Dorsolateral prefrontal cortex (tissue), 120 donors: ENCODE measurements at regions of chr11 and their contacts with region 1.

Region 1: DNA sequence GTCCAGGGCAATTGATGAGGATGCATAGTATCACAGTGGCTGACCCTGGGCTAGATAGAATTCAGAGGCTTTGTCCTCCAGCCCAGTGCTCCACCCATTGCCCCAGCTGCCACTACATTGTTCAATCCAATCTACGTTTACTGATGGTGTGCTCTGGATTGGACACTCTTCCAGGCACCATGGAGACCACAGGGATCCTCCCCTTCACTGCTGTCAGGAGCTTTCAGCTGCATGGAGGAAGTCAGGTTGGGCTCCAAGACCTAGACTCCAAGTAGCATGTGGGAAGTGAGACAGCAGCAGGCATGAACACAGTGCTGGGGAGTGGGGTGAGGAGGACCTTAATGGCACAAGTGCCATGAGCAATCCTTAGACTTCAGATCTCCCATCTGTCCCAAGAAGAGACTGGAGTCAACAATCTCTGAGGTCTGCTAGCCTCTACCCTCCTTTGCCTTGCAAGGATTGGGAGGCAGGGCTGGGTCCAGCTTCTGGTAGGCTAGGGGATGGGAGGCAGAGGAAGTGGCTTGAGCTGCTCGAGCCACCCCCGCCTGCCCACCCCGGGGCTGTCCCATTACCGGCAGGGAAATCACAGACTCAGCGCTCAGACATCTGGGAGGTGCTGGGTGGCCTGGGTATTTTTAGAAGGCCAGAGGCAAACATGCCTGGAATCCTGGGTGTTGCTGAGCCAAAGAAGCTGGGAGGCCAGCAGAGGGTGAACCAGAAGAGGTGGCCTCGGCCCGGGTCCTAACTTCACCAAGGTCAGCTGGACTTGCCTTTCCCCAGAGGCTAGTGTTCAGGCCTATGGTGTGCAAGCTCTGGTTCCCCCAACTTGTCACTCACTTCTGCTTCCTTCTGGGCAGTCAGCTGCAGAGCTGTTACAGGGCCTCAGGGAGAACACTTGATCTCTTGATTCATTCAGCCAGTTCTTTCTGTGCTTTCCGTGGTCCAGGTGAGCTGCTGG is 15.2 kb upstream of the FCHSD2 start:
- DNase-seq: no peak
- H3K4me3 ChIP-seq: no peak overlapping the region
- H3K27ac ChIP-seq: peak overlapping the region in 22 of 59 donors; percentile 1 to 72 (median 44)
- H3K27me3 ChIP-seq: peaks cover 0 to 4% (median 0%) of the 10 kb centered on the region in 45 donors
- CTCF ChIP-seq: no peak

Region 2: GRCh38 chr11:72736452-72737069 is 420.8 kb before region 1 on chr11:
- intact Hi-C with region 1: loop called in 1 of 2 experiments (anchors 10 kb)
- DNase-seq: no peak
- H3K4me3 ChIP-seq: no peak overlapping the region
- H3K27ac ChIP-seq: peak overlapping the region in 28 of 59 donors; percentile 2 to 75 (median 34)
- H3K27me3 ChIP-seq: no peaks in the 10 kb centered on the region
- CTCF ChIP-seq: no peak

Region 3: DNA sequence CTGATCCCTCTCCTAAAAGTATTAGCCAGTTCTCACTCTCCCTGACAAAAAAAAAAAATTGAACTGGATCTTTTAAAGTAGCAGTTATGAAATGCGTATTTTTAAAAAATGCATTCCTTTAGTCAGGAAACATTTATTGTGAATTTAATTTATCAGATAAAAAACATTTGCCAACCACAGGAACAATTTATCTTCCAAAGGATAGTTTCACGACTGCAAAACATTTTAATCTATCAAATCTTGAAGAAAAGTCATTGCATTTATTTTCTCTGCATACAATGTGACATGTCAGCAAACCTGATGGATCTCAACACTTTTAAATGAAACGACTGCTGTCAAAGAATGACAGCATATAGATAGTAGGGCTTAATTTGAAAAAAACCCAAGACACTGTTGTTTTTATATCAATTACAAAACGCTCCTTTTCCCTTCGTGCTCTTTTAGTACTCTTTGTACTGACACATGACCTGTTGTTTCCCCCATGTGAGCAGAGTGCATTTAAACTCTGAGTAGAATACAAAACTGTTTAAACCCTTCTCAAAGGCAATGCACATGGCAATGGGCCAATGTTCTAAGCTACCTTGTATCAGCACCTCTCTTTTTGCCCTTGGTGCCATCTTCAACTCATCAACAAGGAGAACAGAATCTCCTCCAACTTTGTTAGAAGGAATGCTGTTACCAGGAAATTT is 236.2 kb before region 1 on chr11:
- intact Hi-C with region 1: no loop called
- DNase-seq: peak in 1 of 10 donors; percentile 6
- H3K4me3 ChIP-seq: peak overlapping the region in 2 of 59 donors; percentile 1 to 22
- H3K27ac ChIP-seq: peak overlapping the region in 39 of 59 donors; percentile 8 to 77 (median 40)
- H3K27me3 ChIP-seq: no peaks in the 10 kb centered on the region
- CTCF ChIP-seq: no peak

Region 4: GRCh38 chr11:73227588-73228211 is 70.4 kb after region 1 on chr11:
- intact Hi-C with region 1: no loop called
- DNase-seq: peak in 6 of 10 donors; percentile 2 to 32 (median 20)
- H3K4me3 ChIP-seq: no peak overlapping the region
- H3K27ac ChIP-seq: no peak overlapping the region
- H3K27me3 ChIP-seq: no peaks in the 10 kb centered on the region
- CTCF ChIP-seq: no peak

Region 5: GRCh38 chr11:73314117-73314961 is 157.0 kb after region 1 on chr11:
- intact Hi-C with region 1: no loop called
- DNase-seq: peak in 9 of 10 donors; percentile 66 to 84 (median 81)
- H3K4me3 ChIP-seq: peak overlapping the region in 31 of 59 donors; percentile 3 to 79 (median 69)
- H3K27ac ChIP-seq: peak overlapping the region in 58 of 59 donors; percentile 60 to 95 (median 88)
- H3K27me3 ChIP-seq: no peaks in the 10 kb centered on the region
- CTCF ChIP-seq: peak in 11 of 56 donors; percentile 7 to 33 (median 23)